Heart right ventricle (tissue), 16 donors: ENCODE measurements at regions of chr12 and their contacts with region 1.

Region 1: DNA sequence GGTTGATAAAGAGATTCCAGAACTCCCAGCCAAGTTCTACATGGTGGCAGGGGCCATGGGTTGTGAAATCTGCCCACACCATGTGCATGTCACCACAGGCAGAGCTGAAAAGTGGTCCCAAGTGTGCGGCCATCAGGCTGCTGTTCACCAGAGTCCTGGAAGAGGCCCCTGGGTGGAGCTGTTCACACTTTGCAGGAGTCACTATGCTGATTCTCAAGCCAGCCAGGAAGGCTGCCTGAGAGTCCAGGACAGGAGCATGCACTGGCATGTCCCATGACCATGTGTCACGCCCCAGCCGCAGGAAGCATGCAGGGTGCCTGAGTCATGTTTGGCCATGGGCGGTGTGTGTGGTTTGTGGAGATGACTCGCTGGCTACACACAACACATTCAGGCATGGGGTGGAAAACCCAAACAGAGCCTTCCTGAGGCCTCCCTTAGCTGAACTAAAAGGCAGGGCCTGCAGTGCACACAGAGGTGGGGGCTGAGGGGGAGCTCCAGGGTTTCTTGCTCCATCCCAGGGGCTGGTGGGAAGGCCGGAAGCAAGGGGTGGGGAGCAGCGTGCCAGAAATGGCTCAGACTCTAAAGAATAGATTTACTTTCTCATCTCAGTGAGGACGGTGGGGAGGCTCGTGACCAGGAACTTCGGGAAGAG is 19.4 kb downstream of the ABCB9 start:
- DNase-seq: peak; percentile 55 to 73
- ATAC-seq: peak; percentile 45 to 83 (median 75)
- H3K4me3 ChIP-seq: no peak overlapping the region
- H3K27ac ChIP-seq: peak overlapping the region in 9 of 10 donors; percentile 56 to 85 (median 69)
- H3K4me1 ChIP-seq: peaks cover 7 to 63% (median 50%) of the 10 kb centered on the region in 9 donors
- H3K27me3 ChIP-seq: no peaks in the 10 kb centered on the region
- CTCF ChIP-seq: peak in 5 of 9 donors; percentile 17 to 43 (median 28)

Region 2: DNA sequence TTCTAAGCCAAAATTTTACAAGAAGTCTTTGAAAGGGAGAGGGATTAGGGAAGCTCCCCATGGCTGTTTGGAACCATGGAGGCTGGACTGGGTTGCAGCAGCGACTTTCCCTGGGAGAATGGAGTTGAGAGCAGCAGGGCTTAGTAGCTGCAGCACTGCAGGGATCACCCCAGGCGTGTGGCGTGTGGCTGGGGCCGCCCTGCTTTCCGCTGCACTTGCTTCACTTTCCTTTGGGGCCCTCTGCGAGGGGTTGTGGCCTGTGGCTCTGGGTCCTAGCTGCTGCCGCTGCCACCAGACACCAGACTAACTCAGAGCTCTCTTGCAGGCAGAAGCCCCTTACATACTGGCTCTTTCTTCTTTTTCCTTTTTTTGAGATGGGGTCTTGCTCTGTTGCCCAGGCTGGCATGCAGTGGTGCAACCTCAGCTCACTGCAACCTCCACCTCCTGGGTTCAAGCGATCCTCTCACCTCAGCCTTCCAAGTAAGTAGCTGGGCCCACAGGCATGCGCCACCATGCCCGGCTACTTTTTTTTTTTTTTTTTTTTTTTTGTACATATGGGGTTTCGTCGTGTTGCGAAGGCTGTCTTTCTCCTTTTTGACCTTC is 147.1 kb before region 1 on chr12:
- intact Hi-C with region 1: loop called in 7 of 10 experiments (anchors 5 to 10 kb)
- DNase-seq: no peak
- ATAC-seq: no peak
- H3K4me3 ChIP-seq: no peak overlapping the region
- H3K27ac ChIP-seq: no peak overlapping the region
- H3K4me1 ChIP-seq: peaks cover 0 to 3% (median 0%) of the 10 kb centered on the region in 9 donors
- H3K27me3 ChIP-seq: no peaks in the 10 kb centered on the region
- CTCF ChIP-seq: no peak

Region 3: DNA sequence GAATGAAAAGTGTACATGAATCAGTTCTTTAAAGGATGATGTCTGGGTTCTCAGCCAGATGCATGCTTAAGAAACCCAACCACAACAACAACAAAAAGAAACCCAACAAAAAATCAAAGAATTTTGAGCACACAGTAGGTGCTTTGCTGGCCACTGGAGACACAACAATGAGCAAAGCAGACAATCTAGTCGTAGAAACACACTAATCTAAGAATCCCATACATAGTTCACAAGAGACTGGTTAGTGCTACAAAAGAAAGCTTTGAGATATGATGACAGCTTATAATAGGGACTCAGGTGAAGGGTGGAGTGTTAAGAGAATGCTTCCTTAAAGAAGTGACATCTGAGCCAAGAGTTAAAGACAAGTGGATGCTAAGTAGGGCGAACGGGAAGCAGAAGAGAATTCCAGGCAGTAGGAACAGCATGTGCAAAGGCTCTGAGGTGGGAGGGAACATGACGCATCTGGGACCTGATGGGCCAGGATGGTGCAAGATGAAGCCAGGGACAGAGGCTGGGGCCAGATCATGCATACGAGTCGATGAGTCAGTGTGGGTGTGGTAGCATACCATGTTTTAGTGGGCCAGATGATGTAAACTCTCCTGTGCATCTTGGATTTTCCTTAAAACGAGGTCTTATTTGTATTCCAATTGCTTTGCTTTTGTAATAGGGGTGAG is 116.1 kb before region 1 on chr12:
- intact Hi-C with region 1: no loop called
- DNase-seq: no peak
- ATAC-seq: no peak
- H3K4me3 ChIP-seq: no peak overlapping the region
- H3K27ac ChIP-seq: no peak overlapping the region
- H3K4me1 ChIP-seq: peaks cover 0 to 18% (median 10%) of the 10 kb centered on the region in 9 donors
- H3K27me3 ChIP-seq: peaks cover 0 to 5% (median 0%) of the 10 kb centered on the region in 7 donors
- CTCF ChIP-seq: no peak

Region 4: GRCh38 chr12:122980183-122981046 is 33.6 kb after region 1 on chr12 and contains the start of gene ARL6IP4:
- intact Hi-C with region 1: no loop called
- DNase-seq: peak; percentile 53 to 72
- ATAC-seq: peak; percentile 64 to 86 (median 74)
- H3K4me3 ChIP-seq: peak within 1 kb of the TSS; percentile 76 to 100 (median 92)
- H3K27ac ChIP-seq: peak within 1 kb of the TSS; percentile 82 to 98 (median 92)
- H3K4me1 ChIP-seq: peaks cover 36 to 87% (median 72%) of the 10 kb centered on the region in 9 donors
- H3K27me3 ChIP-seq: no peaks in the 10 kb centered on the region
- CTCF ChIP-seq: peak in 1 of 9 donors; percentile 26
- total RNA-seq, gene ARL6IP4: 125 to 161 (median 137) TPM